ENCODE measurements at regions of chr14 and their contacts with region 1.

Region 1: DNA sequence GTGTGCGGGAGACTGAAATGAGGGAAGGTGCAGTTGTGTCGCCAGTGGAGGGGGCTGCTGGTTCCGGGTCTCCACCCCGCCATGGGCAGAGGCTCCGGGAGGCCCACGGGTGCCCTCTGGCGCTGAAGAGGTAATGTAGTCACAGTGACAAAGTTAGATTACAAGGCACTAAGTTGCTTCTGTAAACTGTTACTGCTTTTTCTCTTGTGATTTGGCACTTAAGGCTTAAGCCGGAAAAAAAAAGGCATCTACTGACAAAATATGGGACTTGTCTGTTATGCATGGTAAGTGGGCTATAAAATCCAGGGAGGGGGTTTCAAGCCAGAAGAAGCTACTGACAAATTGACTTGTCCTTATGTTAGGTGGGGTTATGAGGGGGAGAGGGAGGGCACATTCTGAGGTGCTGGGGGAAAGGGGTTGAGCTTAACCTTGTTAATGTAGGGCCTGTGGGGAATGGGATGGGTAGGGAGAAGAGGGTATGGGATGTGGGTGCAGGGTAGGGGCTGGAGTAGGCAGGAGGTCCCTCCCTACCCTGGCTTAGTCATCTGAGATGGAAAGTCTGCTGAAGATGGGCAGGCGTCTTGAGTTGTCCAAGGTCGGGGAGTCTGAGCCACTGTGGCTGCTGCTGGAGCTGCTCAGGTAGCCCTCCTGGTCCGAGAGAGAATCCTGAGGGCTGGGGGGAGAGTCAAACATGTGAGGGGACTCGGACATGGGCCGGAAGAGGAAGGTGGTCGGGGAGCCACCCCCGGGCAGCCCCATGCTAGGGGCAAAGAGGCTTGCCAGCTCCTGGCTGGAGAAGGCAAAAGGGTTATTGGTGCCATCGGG is 3.7 kb downstream of the ZFP36L1 start:
- DNase-seq: peak; percentile 45 to 89
- ATAC-seq: peak in 1 of 2 experiments; percentile 5; a peak in 3 of 6 replicates
- H3K4me3 ChIP-seq: peak overlapping the region; percentile 95
- H3K27ac ChIP-seq: peak overlapping the region; percentile 99 to 100
- H3K4me1 ChIP-seq: peaks cover 41% of the 10 kb centered on the region
- CTCF ChIP-seq: peak; percentile 67
- EP300 ChIP-seq: no peak
- POLR2A ChIP-seq: no peak
- RAD21 ChIP-seq: peak; percentile 79 to 90

Region 2: DNA sequence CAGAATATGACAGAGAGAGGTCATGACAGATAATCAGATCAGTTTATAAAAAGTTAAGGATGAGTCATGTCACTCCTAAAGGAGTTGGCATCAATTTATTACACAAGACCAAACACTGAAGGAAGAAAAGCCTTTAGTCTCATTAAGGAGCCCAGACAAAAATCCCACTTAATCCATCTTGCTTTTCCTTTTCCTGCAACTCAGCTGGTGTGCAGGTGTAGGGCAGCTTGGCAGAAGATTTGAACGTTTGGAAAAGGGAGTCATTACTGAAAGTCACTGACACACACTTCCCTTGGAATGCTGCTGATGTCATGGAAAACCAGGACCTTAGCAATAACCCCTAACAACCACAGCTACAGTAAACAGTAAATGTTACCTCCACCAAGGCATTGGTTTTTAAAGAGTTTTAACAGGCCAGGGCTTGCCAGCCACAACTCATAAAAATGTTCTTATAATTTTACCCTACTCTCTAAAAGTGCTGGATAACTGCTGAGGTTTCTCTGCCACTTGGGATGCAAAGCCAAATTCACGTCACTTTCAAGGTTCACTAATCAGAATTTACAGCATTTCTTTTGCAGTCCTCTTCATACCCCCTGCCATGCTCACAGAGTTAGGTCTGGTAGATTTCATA is 649.0 kb before region 1 on chr14:
- CTCF ChIA-PET with region 1: interaction called, 3 read pairs
- POLR2A ChIA-PET with region 1: interaction called, 34 read pairs
- DNase-seq: peak; percentile 70 to 99
- ATAC-seq: peak; percentile 81 to 86
- H3K4me3 ChIP-seq: no peak overlapping the region
- H3K27ac ChIP-seq: peak overlapping the region; percentile 93 to 98
- H3K4me1 ChIP-seq: peaks cover 90% of the 10 kb centered on the region
- CTCF ChIP-seq: no peak
- EP300 ChIP-seq: peak; percentile 97 to 99
- POLR2A ChIP-seq: no peak
- RAD21 ChIP-seq: peak; percentile 55 to 79

Region 3: GRCh38 chr14:68199554-68200151 is 589.6 kb before region 1 on chr14:
- CTCF ChIA-PET with region 1: no interaction called
- POLR2A ChIA-PET with region 1: interaction called, 13 read pairs
- DNase-seq: no peak
- ATAC-seq: no peak
- H3K4me3 ChIP-seq: no peak overlapping the region
- H3K27ac ChIP-seq: peak overlapping the region; percentile 31 to 66
- H3K4me1 ChIP-seq: peaks cover 41% of the 10 kb centered on the region
- CTCF ChIP-seq: no peak
- EP300 ChIP-seq: no peak
- POLR2A ChIP-seq: no peak
- RAD21 ChIP-seq: no peak

Region 4: DNA sequence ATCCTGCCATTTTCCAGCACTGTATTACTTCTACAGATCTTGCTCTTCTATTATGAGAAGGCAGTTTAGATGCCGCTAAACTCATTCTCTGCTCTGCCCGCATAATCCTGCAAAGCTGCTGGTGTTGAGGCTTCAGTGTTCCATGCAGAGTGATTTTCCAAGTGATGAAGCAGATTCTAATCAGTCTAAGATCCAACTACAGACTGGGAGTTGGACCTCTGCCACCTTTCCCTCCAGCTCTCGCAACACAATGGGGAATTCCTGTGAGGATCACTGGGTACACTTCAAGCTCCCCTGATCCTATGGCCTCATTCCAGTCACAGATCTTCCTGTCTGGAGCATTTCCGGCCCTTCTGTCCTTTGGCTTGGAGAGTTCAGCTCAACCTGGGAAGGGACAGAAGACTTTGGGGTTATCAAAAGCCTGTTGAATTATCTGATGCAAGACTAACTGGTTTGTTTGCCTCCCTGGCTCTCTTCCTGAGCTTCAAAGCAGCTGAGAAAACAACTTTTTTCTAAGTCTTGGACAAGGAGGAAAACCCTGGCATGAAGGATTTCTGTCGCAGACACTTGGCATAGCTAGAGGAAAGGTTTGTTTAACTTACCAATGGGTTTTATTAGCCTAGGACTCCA is 330.3 kb before region 1 on chr14:
- CTCF ChIA-PET with region 1: interaction called, 5 read pairs
- POLR2A ChIA-PET with region 1: interaction called, 57 read pairs
- DNase-seq: peak; percentile 96 to 100
- ATAC-seq: peak; percentile 98 to 99
- H3K4me3 ChIP-seq: no peak overlapping the region
- H3K27ac ChIP-seq: peak overlapping the region; percentile 95 to 100
- H3K4me1 ChIP-seq: peaks cover 59% of the 10 kb centered on the region
- CTCF ChIP-seq: no peak
- EP300 ChIP-seq: peak; percentile 99
- POLR2A ChIP-seq: no peak
- RAD21 ChIP-seq: peak; percentile 52 to 92

Region 5: DNA sequence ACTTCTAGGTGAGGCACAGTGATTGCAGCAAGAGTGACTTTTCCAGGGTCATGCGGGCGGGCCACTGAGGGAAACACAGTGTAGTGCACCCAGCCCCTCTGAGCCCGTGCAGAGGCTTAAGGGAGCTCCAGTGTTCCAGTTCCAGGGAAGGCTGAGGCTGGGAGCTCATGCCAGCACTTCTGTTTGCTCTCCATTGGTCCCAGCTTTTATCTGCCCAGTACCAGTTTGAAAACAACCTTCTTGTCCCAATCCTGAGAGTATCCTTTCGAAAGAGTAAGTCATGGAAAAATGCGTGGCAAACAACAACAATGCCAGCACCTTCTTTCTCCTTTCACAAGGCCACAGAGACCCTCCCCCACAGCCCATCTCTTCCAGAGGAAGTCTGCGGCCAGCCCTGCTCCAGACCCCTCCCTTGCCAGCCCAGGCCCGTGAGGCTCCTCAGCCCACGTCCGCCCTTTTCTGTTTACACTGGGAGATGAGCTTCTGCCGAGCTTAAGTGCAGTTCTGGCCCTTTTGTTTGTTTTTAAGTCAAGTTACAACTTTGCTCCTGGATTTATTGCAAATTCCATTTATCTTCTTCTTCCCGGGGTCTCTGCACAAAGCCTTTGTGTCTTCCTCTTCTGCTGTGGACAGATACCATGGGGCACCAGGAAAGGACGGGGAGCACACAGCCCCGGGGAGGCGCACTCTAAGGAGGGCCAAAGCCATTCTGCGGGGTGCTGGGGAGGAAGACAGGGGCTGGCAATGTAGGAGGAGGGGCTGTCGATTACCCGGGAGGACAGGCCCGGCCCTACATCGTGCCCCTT is 181.9 kb before region 1 on chr14:
- CTCF ChIA-PET with region 1: no interaction called
- POLR2A ChIA-PET with region 1: no interaction called
- DNase-seq: no peak
- ATAC-seq: peak in 1 of 2 experiments; percentile 32; a peak in 3 of 6 replicates
- H3K4me3 ChIP-seq: no peak overlapping the region
- H3K27ac ChIP-seq: peak overlapping the region; percentile 55 to 78
- H3K4me1 ChIP-seq: peaks cover 13% of the 10 kb centered on the region
- CTCF ChIP-seq: no peak
- EP300 ChIP-seq: no peak
- POLR2A ChIP-seq: no peak
- RAD21 ChIP-seq: no peak

Region 6: GRCh38 chr14:68685419-68686204 is 103.6 kb before region 1 on chr14:
- CTCF ChIA-PET with region 1: interaction called, 5 read pairs
- POLR2A ChIA-PET with region 1: interaction called, 16 read pairs
- DNase-seq: no peak
- ATAC-seq: no peak
- H3K4me3 ChIP-seq: no peak overlapping the region
- H3K27ac ChIP-seq: peak overlapping the region; percentile 86 to 94
- H3K4me1 ChIP-seq: peaks cover 63% of the 10 kb centered on the region
- CTCF ChIP-seq: no peak
- EP300 ChIP-seq: no peak
- POLR2A ChIP-seq: no peak
- RAD21 ChIP-seq: no peak

Measured in A549 (cell line).